Heart right ventricle (tissue), 16 donors: ENCODE measurements at regions of chr4 and their contacts with region 1.

Region 1: DNA sequence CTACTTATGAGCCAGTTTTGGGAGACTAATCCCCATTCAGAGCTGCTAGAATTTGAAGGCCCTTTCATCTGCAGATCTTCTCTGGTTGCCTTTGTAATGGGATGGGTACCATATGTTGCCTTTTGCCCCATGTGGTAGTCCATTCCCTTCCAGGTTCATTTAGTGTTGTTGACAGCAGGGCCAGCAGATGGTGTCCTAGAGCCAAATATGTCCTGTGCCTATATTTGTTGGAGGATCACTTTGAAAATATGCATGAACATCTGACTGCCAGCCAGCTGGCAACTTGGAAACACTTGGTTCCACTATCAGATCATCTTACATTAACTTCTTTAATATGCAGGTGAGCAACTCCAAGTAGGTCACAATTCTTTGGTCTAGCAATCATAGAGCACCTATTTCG is 30.4 kb downstream of the CFAP299 start:
- DNase-seq: no peak
- ATAC-seq: peak in 2 of 8 donors; percentile 46 to 63
- H3K4me3 ChIP-seq: no peak overlapping the region
- H3K27ac ChIP-seq: no peak overlapping the region
- H3K4me1 ChIP-seq: no peaks in the 10 kb centered on the region
- H3K27me3 ChIP-seq: peaks cover 0 to 7% (median 0%) of the 10 kb centered on the region in 7 donors
- CTCF ChIP-seq: peak in 7 of 9 donors; percentile 43 to 63 (median 49)

Region 2: GRCh38 chr4:80989921-80990544 is 624.1 kb after region 1 on chr4:
- intact Hi-C with region 1: loop called in 9 of 10 experiments (anchors 2 to 10 kb)
- DNase-seq: peak in 1 of 2 donors; percentile 6
- ATAC-seq: no peak
- H3K4me3 ChIP-seq: no peak overlapping the region
- H3K27ac ChIP-seq: no peak overlapping the region
- H3K4me1 ChIP-seq: no peaks in the 10 kb centered on the region
- H3K27me3 ChIP-seq: peaks cover 0 to 4% (median 0%) of the 10 kb centered on the region in 7 donors
- CTCF ChIP-seq: peak in 8 of 9 donors; percentile 28 to 70 (median 64)

Region 3: GRCh38 chr4:81030061-81030980 is 664.4 kb after region 1 on chr4 and contains the start of gene BMP3:
- intact Hi-C with region 1: loop called in 1 of 10 experiments (anchors 10 kb)
- DNase-seq: no peak
- ATAC-seq: peak in 4 of 8 donors; percentile 22 to 46 (median 29)
- H3K4me3 ChIP-seq: peak within 1 kb of the TSS; percentile 6 to 46 (median 36)
- H3K27ac ChIP-seq: no peak within 1 kb of the TSS
- H3K4me1 ChIP-seq: peaks cover 0 to 20% (median 10%) of the 10 kb centered on the region in 9 donors
- H3K27me3 ChIP-seq: peaks cover 5 to 88% (median 69%) of the 10 kb centered on the region in 7 donors
- CTCF ChIP-seq: no peak
- total RNA-seq, gene BMP3: 0.12 TPM in 1 of 10 donors, not detected in the others

Region 4: DNA sequence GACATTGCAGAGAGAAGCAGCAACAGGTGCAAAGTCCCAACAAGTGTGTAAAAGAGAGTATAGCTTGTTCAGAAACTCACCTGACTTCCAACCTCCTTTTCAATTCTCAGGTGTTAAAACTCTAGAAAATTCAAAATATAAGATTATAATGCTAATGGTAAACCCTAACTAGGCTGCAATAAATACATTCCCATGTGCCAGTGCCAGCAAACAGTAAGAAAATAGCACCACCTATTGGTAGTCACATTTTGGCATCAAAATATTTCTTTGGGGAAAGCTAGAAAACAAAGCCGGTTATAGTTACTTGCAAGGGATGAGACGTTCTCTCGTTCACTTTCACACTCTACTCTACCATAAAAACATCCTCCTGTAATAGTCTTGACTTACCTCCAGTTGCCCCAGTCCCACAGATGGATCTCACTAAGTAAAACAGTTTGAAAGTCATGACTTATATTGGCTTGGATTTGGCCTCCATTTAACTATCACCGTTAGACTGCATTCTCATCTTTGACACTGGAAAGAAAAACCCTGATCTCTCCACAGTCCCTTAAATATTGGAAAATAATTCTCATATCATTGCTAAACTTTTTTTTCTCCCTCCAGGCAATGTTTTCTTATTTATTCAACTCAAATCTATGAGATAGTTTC is 674.2 kb after region 1 on chr4:
- intact Hi-C with region 1: loop called in 4 of 10 experiments (anchors 5 to 10 kb)
- DNase-seq: no peak
- ATAC-seq: no peak
- H3K4me3 ChIP-seq: no peak overlapping the region
- H3K27ac ChIP-seq: no peak overlapping the region
- H3K4me1 ChIP-seq: no peaks in the 10 kb centered on the region
- H3K27me3 ChIP-seq: peaks cover 0 to 42% (median 6%) of the 10 kb centered on the region in 7 donors
- CTCF ChIP-seq: peak in 7 of 9 donors; percentile 40 to 59 (median 53)

Region 5: DNA sequence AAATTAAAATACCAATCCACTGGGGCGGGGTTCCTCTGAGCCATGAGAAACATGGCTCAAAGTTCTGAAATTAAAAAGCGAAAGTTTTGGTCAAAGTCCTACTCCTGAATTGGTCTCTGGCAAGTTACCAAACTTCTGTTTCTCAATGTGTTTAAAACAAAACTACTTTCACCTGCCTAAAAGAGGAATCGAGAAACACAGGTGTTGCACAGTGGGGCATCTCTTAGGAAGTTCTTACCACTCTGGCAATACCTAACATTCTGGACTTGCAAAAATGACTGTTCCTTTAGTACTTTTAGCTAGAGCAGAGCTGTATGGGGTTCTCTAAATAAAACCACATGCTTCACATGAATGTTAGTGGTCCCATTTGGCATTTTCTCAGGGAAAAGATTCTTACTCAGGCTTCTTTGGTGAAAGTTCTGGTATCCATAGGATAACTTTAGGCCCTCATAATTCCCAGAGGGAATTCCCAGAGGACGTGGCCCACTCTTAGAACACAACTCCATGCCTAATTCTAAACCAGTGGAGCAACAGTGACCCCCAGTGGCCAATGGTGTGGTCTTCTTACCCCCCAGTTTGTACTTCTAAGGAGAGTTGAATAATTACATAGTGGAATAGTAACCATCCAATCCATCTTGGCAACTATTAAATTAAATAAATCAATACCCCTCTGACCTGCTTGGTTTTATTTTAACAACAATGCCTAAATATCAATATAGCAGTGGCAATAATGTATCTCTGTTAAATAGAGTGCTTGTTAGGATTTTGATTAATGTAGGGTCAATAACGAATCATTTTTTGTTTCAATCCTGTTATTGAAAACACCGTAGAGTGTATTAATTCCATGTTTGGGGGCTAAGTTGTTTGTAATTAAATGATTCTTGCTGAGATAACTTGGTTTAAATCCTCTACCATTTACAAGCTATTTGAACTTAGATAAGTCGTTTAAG is 686.5 kb after region 1 on chr4:
- intact Hi-C with region 1: loop called in 4 of 10 experiments (anchors 2 to 10 kb)
- DNase-seq: peak; percentile 16 to 28
- ATAC-seq: peak in 2 of 8 donors; percentile 64 to 72
- H3K4me3 ChIP-seq: no peak overlapping the region
- H3K27ac ChIP-seq: no peak overlapping the region
- H3K4me1 ChIP-seq: peaks cover 0 to 6% (median 0%) of the 10 kb centered on the region in 9 donors
- H3K27me3 ChIP-seq: peaks cover 0 to 2% (median 0%) of the 10 kb centered on the region in 7 donors
- CTCF ChIP-seq: peak; percentile 25 to 65 (median 59)